ENCODE measurements at regions of chr18 and their contacts with region 1.

Region 1: GRCh38 chr18:11937874-11938478 is 29.9 kb upstream of the MPPE1 start:
- DNase-seq: peak; percentile 87 to 95
- H3K4me3 ChIP-seq: no peak overlapping the region
- CTCF ChIP-seq: peak in 1 of 3 donors; percentile 37
- POLR2A ChIP-seq: no peak

Region 2: GRCh38 chr18:11840493-11840892 is 97.5 kb before region 1 on chr18:
- intact Hi-C with region 1: no loop called
- DNase-seq: no peak
- H3K4me3 ChIP-seq: no peak overlapping the region
- CTCF ChIP-seq: no peak
- POLR2A ChIP-seq: no peak

Region 3: DNA sequence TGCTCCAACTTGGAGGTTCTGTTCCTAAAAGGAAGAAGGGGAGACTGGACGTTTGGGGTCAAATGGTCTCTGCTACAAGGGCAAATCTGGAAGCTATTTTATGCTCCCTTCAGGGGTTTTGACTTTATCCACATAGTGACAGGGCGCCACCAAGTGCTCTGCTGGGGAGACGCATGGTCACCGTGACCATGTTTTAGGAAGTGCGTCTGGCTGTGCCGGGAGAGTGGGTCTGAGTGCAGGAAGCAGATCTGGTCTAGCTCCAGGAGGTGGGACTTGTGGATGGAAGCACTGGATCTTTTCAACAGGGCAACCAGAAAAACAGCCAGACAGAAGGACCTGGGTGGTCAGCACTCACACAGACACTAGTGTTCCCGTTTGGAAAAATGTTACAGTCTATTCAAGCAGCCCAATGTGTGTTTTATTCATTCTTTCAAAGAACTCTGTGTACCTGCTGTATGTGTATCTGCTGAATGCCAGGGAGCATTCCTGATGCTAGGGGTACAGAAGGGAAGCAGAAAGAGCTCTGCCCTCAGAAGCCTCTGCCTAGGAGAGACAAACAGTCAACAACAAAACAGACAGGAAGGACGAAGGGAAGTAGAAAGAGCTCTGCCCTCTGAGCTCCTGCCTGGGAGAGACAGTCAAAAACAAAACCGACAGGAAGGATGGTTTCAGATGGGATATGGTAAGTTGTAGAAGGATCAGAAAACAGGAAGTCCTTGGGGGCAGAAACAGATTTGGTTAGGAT is 57.6 kb after region 1 on chr18:
- intact Hi-C with region 1: loop called (anchors 5 kb)
- DNase-seq: peak; percentile 70 to 94
- H3K4me3 ChIP-seq: no peak overlapping the region
- CTCF ChIP-seq: peak in 1 of 3 donors; percentile 63
- POLR2A ChIP-seq: no peak

Region 4: GRCh38 chr18:12038639-12039417 is 100.9 kb after region 1 on chr18:
- intact Hi-C with region 1: loop called (anchors 5 kb)
- DNase-seq: peak; percentile 72 to 96
- H3K4me3 ChIP-seq: peak overlapping the region; percentile 1
- CTCF ChIP-seq: peak in 1 of 3 donors; percentile 98
- POLR2A ChIP-seq: no peak

Measured in lower leg skin (tissue), 4 donors.